Activated CD4-positive, alpha-beta T cell treated with anti-CD3 and anti-CD28 coated beads, Interleukin-2, amount 10 ng/mL, durations not matched to agents 7 days and 5 days (primary cell): ENCODE measurements at regions of chr1 and their contacts with region 1.

Region 1: GRCh38 chr1:18926315-18927081 is 24.1 kb upstream of the ALDH4A1 start:
- DNase-seq: peak; percentile 89
- H3K4me3 Mint-ChIP-seq: peak overlapping the region; percentile 86
- H3K27ac Mint-ChIP-seq: peak overlapping the region; percentile 100
- H3K4me1 Mint-ChIP-seq: peaks cover 77% of the 10 kb centered on the region
- H3K27me3 Mint-ChIP-seq: no peaks in the 10 kb centered on the region

Region 2: DNA sequence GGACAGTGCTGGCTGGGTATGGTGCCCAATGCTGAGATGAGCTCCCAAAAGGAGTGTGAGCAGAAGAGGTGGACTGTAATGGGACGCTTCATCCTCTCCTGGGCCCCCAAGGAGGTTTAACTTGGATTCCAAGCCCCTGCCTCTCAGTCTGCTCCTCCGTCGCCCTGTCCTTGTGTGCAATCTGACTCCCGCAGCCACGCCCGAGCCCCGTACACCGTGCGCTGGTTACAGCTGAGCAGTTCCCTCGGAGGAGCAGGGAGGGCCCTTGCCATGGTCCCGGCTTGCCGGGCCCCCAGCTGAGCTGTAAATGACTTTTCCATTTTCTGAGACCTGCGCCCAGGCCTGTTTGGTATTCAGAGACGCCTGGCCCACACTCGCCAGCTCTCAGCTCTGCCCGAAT is 242.2 kb before region 1 on chr1:
- CTCF ChIA-PET with region 1: no interaction called
- POLR2A ChIA-PET with region 1: no interaction called
- DNase-seq: no peak
- H3K4me3 Mint-ChIP-seq: no peak overlapping the region
- H3K27ac Mint-ChIP-seq: no peak overlapping the region
- H3K4me1 Mint-ChIP-seq: peaks cover 2% of the 10 kb centered on the region
- H3K27me3 Mint-ChIP-seq: peaks cover 7% of the 10 kb centered on the region

Region 3: GRCh38 chr1:18907021-18907916 is 19.2 kb before region 1 on chr1:
- CTCF ChIA-PET with region 1: interaction called, 26 read pairs
- POLR2A ChIA-PET with region 1: no interaction called
- DNase-seq: peak; percentile 81
- H3K4me3 Mint-ChIP-seq: no peak overlapping the region
- H3K27ac Mint-ChIP-seq: no peak overlapping the region
- H3K4me1 Mint-ChIP-seq: peaks cover 24% of the 10 kb centered on the region
- H3K27me3 Mint-ChIP-seq: no peaks in the 10 kb centered on the region

Region 4: GRCh38 chr1:18913065-18913835 is 13.2 kb before region 1 on chr1:
- CTCF ChIA-PET with region 1: interaction called, 26 read pairs
- POLR2A ChIA-PET with region 1: no interaction called
- DNase-seq: peak; percentile 64
- H3K4me3 Mint-ChIP-seq: no peak overlapping the region
- H3K27ac Mint-ChIP-seq: no peak overlapping the region
- H3K4me1 Mint-ChIP-seq: peaks cover 5% of the 10 kb centered on the region
- H3K27me3 Mint-ChIP-seq: no peaks in the 10 kb centered on the region

Region 5: DNA sequence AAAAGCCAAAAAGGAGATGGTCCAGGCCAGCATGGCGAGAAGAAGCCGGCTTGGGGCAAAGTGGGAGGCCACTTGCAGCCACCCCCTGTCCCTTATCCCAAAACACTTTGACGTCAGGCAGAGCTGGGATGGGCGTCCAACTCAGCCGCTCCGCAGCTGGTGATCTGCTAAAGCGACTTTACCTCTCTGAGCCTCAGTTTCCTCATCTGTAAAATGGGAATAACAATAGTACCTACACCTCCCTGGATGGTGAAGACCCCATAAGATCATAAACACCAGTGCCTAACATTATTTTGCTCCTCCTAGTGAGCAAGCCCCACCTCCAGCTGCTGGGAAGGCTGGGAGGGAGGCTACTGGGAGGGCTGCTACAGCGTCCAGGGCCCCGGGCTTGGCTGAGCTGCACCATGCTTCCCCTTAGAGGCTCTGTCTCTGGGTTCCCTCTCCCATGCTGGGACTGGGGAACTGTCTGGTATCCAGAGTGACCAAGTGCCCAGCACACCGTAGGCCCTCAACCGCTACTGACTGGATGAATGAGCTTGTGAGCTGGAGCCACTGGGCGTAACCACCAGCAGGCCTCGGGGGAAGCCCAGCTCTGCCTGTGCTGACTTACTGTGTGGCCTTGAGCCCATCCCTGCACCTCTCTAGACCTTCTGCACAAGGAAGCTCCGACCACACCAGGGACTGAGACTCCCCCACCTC is 11.7 kb after region 1 on chr1:
- CTCF ChIA-PET with region 1: interaction called, 10 read pairs
- POLR2A ChIA-PET with region 1: no interaction called
- DNase-seq: no peak
- H3K4me3 Mint-ChIP-seq: no peak overlapping the region
- H3K27ac Mint-ChIP-seq: no peak overlapping the region
- H3K4me1 Mint-ChIP-seq: peaks cover 27% of the 10 kb centered on the region
- H3K27me3 Mint-ChIP-seq: no peaks in the 10 kb centered on the region

Region 6: DNA sequence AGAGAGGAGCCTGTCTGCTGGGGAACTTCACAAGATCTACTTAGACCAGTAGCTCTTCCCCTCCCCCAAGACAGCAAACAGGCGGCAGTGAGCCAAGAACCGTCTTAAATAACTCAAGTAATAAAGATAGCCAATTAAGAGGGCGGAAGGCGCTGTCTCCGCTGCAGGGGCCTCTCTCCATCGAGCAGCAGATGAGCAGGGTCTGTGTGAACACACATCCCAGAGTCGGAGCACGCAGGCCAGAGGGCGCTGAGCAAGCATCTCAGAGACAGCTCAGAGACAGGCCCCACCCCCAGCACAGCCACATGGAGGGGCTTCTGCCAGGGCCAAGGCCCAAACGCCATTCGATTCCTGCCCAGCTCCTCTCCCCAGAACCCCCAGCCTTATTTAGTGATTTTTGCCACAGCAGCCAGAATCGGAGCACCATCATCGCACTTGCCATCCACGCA is 18.9 kb after region 1 on chr1:
- CTCF ChIA-PET with region 1: interaction called, 10 read pairs
- POLR2A ChIA-PET with region 1: interaction called, 7 read pairs
- DNase-seq: no peak
- H3K4me3 Mint-ChIP-seq: no peak overlapping the region
- H3K27ac Mint-ChIP-seq: peak overlapping the region; percentile 7
- H3K4me1 Mint-ChIP-seq: peaks cover 62% of the 10 kb centered on the region
- H3K27me3 Mint-ChIP-seq: no peaks in the 10 kb centered on the region